Naive thymus-derived CD8-positive, alpha-beta T cell (primary cell): ENCODE measurements at regions of chr15 and their contacts with region 1.

Region 1: DNA sequence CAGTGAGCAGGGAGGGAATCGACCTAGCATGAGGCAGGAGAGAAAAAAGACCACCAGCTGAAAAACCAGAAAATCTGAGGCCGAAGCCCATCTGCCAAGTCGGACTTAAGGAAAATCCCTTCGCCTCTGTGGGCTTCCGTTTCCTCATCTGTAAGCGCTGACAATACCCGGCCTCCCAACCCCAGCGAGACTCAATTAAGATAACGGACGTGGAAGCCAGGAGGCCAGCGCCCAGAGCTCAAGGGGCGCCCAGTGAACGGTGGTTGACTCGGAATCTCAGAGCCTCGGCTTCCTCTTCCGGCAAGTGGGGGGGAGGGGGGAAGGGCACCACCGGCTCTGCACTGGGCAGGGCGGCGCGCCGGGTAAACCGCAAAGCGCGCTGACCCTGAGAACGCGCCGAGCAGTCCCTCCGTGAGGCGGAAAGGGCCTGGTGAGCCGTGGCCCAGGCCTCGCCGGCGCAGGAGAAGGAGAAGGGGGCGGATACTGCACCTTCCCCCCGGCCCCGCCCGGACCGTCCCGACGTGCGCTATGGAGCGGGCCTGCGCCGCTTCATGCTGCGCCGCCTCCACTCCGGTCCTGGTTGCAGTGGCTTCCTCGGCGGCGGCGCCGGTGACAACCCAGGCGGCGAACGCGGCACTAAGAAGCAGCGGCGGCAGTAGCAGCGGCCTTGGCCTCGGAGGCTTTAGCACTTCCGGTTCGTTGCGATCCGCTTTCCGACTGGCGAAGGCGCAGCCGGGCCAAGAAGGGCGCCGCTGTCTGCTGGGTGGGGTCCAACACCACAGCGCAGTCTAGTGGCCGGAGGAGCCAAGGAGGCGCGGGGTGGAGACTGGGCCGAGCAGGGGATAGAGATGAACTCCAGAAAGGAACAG is at the start of gene DPP8:
- DNase-seq: peak; percentile 86 to 95 (median 93)
- ATAC-seq: peak; percentile 94
- H3K4me3 Mint-ChIP-seq: peak within 1 kb of the TSS; percentile 86 to 100 (median 95)
- H3K27ac Mint-ChIP-seq: peak within 1 kb of the TSS; percentile 79 to 99 (median 93)
- H3K4me1 Mint-ChIP-seq: peaks cover 9 to 53% (median 41%) of the 10 kb centered on the region in 4 donors
- H3K27me3 Mint-ChIP-seq: no peaks in the 10 kb centered on the region
- polyA plus RNA-seq, gene DPP8: 38.1 to 47.1 (median 41.8) TPM

Region 2: GRCh38 chr15:65530314-65531122 is 13.3 kb after region 1 on chr15 and contains the start of gene HACD3:
- POLR2A ChIA-PET with region 1: interaction called, 11 read pairs
- DNase-seq: peak; percentile 79 to 96 (median 88)
- ATAC-seq: peak; percentile 95 to 98
- H3K4me3 Mint-ChIP-seq: peak within 1 kb of the TSS; percentile 79 to 93 (median 88)
- H3K27ac Mint-ChIP-seq: peak within 1 kb of the TSS; percentile 85 to 96 (median 92)
- H3K4me1 Mint-ChIP-seq: peaks cover 19 to 44% (median 37%) of the 10 kb centered on the region in 4 donors
- H3K27me3 Mint-ChIP-seq: no peaks in the 10 kb centered on the region
- polyA plus RNA-seq, gene HACD3: 26.1 to 31.6 (median 30.6) TPM

Region 3: GRCh38 chr15:65712415-65712814 is 195.2 kb after region 1 on chr15:
- POLR2A ChIA-PET with region 1: no interaction called
- DNase-seq: no peak
- ATAC-seq: no peak
- H3K4me3 Mint-ChIP-seq: no peak overlapping the region
- H3K27ac Mint-ChIP-seq: no peak overlapping the region
- H3K4me1 Mint-ChIP-seq: peaks cover 0 to 6% (median 5%) of the 10 kb centered on the region in 4 donors
- H3K27me3 Mint-ChIP-seq: no peaks in the 10 kb centered on the region